ENCODE measurements at regions of chr19 and their contacts with region 1.

Region 1: DNA sequence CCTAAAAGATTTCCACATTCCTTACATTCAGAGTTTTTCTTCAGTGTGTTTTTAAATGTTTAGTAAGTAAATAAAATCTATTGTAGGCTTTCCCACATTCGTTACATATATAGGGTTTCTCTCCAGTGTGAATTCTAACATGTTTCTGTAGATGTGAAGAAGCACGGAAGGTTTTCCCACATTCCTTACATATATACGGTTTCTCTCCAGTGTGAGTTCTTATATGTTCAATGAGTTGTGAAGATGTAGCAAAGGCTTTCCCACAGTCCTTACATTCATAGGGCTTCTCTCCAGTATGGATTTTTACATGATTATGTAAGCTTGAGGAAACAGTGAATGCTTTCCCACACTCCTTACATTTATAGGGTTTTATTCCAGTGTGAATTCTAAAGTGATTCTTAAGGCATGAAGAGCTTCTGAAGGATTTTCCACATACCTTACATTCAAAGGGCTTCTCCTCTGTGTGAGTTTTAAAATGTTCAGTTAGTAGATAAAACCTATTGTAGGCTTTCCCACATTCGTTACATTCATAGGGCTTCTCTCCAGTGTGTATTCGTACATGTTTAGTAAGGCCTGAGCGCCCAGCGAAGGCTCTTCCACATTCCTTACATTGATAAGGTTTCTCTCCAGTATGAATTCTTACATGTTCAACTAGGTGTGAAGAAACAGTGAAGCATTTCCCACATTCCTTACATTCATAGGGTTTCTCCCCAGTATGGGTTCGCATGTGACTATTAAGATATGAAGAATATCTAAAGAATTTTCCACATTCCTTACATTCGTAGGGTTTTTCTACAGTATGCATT is 18.2 kb downstream of the ZNF121 start:
- DNase-seq: peak in 2 of 3 donors; percentile 49 to 64
- H3K4me3 ChIP-seq: peak overlapping the region in 2 of 7 experiments; percentile 10 to 33
- H3K27ac ChIP-seq: no peak overlapping the region
- H3K4me1 ChIP-seq: no peaks in the 10 kb centered on the region
- H3K27me3 ChIP-seq: no peaks in the 10 kb centered on the region

Region 2: GRCh38 chr19:9498183-9498902 is 67.8 kb before region 1 on chr19 and contains the start of gene ZNF560:
- CTCF ChIA-PET with region 1: no interaction called
- POLR2A ChIA-PET with region 1: no interaction called
- DNase-seq: peak in 2 of 3 donors; percentile 15 to 36
- H3K4me3 ChIP-seq: peak within 1 kb of the TSS in 2 of 7 experiments; percentile 33 to 48
- H3K27ac ChIP-seq: no peak within 1 kb of the TSS
- H3K4me1 ChIP-seq: no peaks in the 10 kb centered on the region
- H3K27me3 ChIP-seq: peaks cover 0 to 21% (median 5%) of the 10 kb centered on the region in 5 experiments

Region 3: GRCh38 chr19:9768175-9769112 is 202.3 kb after region 1 on chr19 and contains the start of gene ZNF846:
- CTCF ChIA-PET with region 1: no interaction called
- POLR2A ChIA-PET with region 1: interaction called, 10 read pairs
- DNase-seq: peak; percentile 97 to 99 (median 98)
- H3K4me3 ChIP-seq: peak within 1 kb of the TSS; percentile 78 to 98 (median 94)
- H3K27ac ChIP-seq: peak within 1 kb of the TSS; percentile 91 to 96
- H3K4me1 ChIP-seq: peaks cover 0 to 18% (median 11%) of the 10 kb centered on the region in 4 experiments
- H3K27me3 ChIP-seq: no peaks in the 10 kb centered on the region